ENCODE measurements at regions of chr3 and their contacts with region 1.

Region 1: GRCh38 chr3:108088697-108089096 is 2.1 kb downstream of the CD47 start:
- DNase-seq: peak; percentile 20
- H3K4me3 Mint-ChIP-seq: peak overlapping the region; percentile 33
- H3K27ac Mint-ChIP-seq: no peak overlapping the region
- H3K4me1 Mint-ChIP-seq: peaks cover 11% of the 10 kb centered on the region
- H3K27me3 Mint-ChIP-seq: no peaks in the 10 kb centered on the region
- CTCF ChIP-seq: no peak

Region 2: GRCh38 chr3:107931326-107931725 is 157.4 kb before region 1 on chr3:
- CTCF ChIA-PET with region 1: no interaction called
- intact Hi-C with region 1: no loop called
- DNase-seq: no peak
- H3K4me3 Mint-ChIP-seq: no peak overlapping the region
- H3K27ac Mint-ChIP-seq: no peak overlapping the region
- H3K4me1 Mint-ChIP-seq: no peaks in the 10 kb centered on the region
- H3K27me3 Mint-ChIP-seq: no peaks in the 10 kb centered on the region
- CTCF ChIP-seq: no peak

Region 3: GRCh38 chr3:107978131-107979055 is 110.3 kb before region 1 on chr3:
- CTCF ChIA-PET with region 1: no interaction called
- intact Hi-C with region 1: no loop called
- DNase-seq: no peak
- H3K4me3 Mint-ChIP-seq: no peak overlapping the region
- H3K27ac Mint-ChIP-seq: no peak overlapping the region
- H3K4me1 Mint-ChIP-seq: peaks cover 29% of the 10 kb centered on the region
- H3K27me3 Mint-ChIP-seq: no peaks in the 10 kb centered on the region
- CTCF ChIP-seq: no peak

Region 4: DNA sequence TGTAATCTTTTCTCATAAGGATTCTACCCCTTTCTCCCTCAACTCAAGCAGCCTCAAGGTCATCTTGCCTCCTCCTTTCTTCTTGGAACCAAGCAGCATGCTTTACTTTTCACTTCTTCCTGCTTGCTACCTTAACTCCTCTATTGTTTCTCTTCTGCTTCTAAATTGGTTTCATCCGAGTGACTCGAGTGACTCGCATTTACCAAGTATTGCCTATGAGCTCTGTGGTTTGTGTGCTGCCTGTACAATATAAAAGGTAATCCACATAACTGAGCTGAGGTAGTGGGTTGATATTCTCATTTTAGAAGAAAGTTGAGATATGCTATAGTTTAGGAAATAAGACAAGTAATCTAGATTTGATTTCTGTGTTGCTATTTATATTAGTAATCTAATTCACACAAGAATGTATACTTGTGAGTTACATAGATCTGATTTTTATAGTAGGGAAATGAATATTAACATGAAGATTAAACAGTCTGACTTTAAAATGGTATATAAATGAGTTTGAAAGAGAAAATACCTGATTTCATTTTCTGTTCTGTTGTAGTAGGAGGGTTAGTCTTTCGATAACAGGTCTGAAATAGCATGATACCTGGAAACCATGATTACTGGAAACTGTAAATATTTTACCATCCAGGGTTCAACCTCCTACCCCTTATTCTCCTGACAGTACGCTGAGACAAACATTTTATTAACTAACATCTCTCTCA is 213.2 kb after region 1 on chr3:
- CTCF ChIA-PET with region 1: no interaction called
- intact Hi-C with region 1: loop called (anchors 5 kb)
- DNase-seq: no peak
- H3K4me3 Mint-ChIP-seq: peak overlapping the region; percentile 59
- H3K27ac Mint-ChIP-seq: peak overlapping the region; percentile 91
- H3K4me1 Mint-ChIP-seq: peaks cover 78% of the 10 kb centered on the region
- H3K27me3 Mint-ChIP-seq: no peaks in the 10 kb centered on the region
- CTCF ChIP-seq: no peak

Measured in Calu3 (cell line).